Ovary (tissue), 10 donors: ENCODE measurements at regions of chr5 and their contacts with region 1.

Region 1: DNA sequence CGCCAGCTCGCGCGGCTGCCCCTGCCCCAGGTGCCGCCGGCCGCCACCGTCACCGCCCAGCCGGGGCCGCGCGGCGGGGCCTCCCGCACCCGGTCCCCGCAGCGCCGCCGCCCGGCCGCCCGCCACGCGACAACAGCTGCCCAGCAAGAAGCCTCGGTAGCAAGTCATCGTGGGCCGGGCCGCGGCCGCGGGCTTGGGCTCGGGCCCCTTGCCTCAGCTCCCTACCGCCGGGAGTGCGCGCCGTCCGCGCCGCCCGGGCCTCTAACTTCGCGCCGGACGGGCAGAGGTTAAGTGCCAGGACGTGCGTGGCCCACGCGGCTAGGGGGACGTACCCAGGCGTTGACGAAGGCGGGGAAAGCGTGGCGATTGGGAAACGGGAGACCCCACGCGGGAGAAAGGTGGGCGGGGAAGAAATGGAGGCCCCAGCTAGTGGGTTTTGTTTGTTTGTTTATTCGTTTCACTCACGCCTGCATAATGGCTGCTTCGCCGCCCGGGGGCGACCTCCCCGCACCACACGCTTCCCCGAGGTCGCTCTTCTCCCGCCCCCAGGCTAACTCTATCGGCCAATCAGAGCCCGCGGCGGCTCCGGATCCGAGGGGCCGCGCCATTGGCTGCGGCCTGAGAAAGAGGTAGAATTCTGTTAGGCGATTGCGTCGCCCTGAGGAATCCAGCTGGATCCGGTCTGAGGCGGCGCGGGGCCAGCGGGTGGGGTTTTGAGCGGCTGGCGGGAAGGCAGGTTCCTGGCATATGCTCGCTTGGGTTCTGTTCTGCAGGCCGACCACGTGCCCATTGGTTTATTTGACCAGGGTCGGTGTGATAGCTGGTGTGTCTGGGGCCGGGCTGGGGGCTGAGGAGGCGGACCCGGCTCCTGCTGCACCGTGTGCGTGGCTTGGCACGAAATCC is at the start of gene NADK2:
- DNase-seq: peak; percentile 96 to 97 (median 97)
- H3K4me3 ChIP-seq: peak within 1 kb of the TSS; percentile 59
- H3K27ac ChIP-seq: peak within 1 kb of the TSS; percentile 88 to 99
- H3K4me1 ChIP-seq: peaks cover 10% of the 10 kb centered on the region
- H3K27me3 ChIP-seq: no peaks in the 10 kb centered on the region
- CTCF ChIP-seq: peak; percentile 66 to 91 (median 80)
- EP300 ChIP-seq: no peak
- POLR2A ChIP-seq: peak; percentile 90
- total RNA-seq, gene NADK2: 16.7 to 46.7 (median 32.0) TPM

Region 2: DNA sequence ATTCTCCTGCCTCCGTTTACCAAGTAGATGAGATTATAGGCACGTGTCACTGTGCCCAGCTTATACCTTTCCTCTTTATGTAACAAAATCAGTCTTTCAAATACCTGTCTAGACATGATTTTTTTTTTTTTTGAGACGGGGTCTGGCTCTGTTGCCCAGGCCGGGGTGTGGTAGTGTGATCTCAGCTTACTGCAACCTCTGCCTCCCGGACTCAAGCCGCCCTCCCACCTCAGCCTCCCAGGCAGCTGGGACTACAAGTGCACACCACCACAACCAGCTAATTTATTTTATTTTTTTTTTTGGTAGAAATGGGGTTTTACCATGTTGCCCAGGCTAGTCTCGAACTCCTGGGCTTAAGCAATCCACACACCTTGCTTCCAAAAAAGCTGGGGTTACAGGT is 13.4 kb before region 1 on chr5:
- intact Hi-C with region 1: no loop called
- DNase-seq: no peak
- H3K4me3 ChIP-seq: no peak overlapping the region
- H3K27ac ChIP-seq: no peak overlapping the region
- H3K4me1 ChIP-seq: peaks cover 5% of the 10 kb centered on the region
- H3K27me3 ChIP-seq: no peaks in the 10 kb centered on the region
- CTCF ChIP-seq: no peak
- EP300 ChIP-seq: no peak
- POLR2A ChIP-seq: no peak

Region 3: GRCh38 chr5:36305571-36306326 is 63.9 kb after region 1 on chr5:
- intact Hi-C with region 1: loop called in 2 of 4 experiments (anchors 10 kb)
- DNase-seq: peak; percentile 38 to 65 (median 49)
- H3K4me3 ChIP-seq: no peak overlapping the region
- H3K27ac ChIP-seq: no peak overlapping the region
- H3K4me1 ChIP-seq: peaks cover 3% of the 10 kb centered on the region
- H3K27me3 ChIP-seq: no peaks in the 10 kb centered on the region
- CTCF ChIP-seq: peak in 2 of 3 donors; percentile 53 to 54
- EP300 ChIP-seq: no peak
- POLR2A ChIP-seq: no peak

Region 4: DNA sequence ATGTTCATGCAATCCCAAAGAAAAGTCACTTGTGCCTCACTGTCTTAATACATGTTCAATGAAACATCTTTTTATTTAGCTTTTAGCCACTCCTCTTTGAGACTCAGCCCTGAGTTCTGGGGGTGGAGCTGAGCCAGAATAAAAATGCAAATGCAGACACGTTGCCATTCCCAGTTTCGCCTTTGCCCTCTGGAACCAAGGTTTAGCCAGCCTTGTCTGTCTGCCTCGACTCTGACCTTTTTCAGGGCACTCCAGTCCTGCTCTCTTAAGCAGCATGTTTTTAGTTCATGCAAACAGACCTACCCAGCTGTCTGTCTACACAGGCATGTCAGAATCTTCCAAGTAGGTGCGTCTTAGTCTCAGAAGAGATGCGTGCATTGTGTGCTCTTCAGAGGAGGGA is 142.1 kb after region 1 on chr5:
- intact Hi-C with region 1: no loop called
- DNase-seq: no peak
- H3K4me3 ChIP-seq: no peak overlapping the region
- H3K27ac ChIP-seq: no peak overlapping the region
- H3K4me1 ChIP-seq: no peaks in the 10 kb centered on the region
- H3K27me3 ChIP-seq: no peaks in the 10 kb centered on the region
- CTCF ChIP-seq: no peak
- EP300 ChIP-seq: no peak
- POLR2A ChIP-seq: no peak

Region 5: GRCh38 chr5:36397901-36398536 is 156.1 kb after region 1 on chr5:
- intact Hi-C with region 1: loop called in 1 of 4 experiments (anchors 10 kb)
- DNase-seq: no peak
- H3K4me3 ChIP-seq: no peak overlapping the region
- H3K27ac ChIP-seq: no peak overlapping the region
- H3K4me1 ChIP-seq: no peaks in the 10 kb centered on the region
- H3K27me3 ChIP-seq: no peaks in the 10 kb centered on the region
- CTCF ChIP-seq: peak; percentile 33 to 55 (median 40)
- EP300 ChIP-seq: no peak
- POLR2A ChIP-seq: no peak